ENCODE measurements at regions of chr12 and their contacts with region 1.

Region 1: GRCh38 chr12:55073043-55074022 is 52.9 kb upstream of the OR9K2 start:
- DNase-seq: peak; percentile 90
- H3K4me3 Mint-ChIP-seq: no peak overlapping the region
- H3K27ac Mint-ChIP-seq: no peak overlapping the region
- H3K4me1 Mint-ChIP-seq: peaks cover 3% of the 10 kb centered on the region
- H3K27me3 Mint-ChIP-seq: peaks cover 21% of the 10 kb centered on the region

Region 2: GRCh38 chr12:54701940-54702592 is 371.3 kb before region 1 on chr12:
- CTCF ChIA-PET with region 1: interaction called, 32 read pairs
- intact Hi-C with region 1: loop called (anchors 1 kb)
- DNase-seq: no peak
- H3K4me3 Mint-ChIP-seq: no peak overlapping the region
- H3K27ac Mint-ChIP-seq: no peak overlapping the region
- H3K4me1 Mint-ChIP-seq: no peaks in the 10 kb centered on the region
- H3K27me3 Mint-ChIP-seq: no peaks in the 10 kb centered on the region

Region 3: DNA sequence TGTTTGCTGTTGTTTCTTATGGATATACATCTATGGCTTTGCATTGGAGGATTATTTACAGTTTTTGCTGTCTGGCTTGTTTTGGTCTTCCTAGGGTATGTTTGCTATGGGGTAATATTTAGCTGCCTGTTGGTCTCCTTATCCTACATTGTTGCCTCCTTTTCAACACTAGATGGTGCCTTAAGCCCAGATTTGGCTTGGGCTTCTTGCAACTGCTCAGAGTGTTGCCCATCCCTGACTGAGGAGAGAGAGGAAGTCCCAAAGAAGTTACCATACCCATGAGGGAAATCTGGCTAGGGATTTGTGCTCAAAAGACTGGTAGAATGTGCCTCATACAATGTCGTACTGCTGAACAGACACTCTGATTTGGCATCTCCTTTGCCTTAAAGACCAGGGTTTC is 313.6 kb before region 1 on chr12:
- CTCF ChIA-PET with region 1: interaction called, 52 read pairs
- intact Hi-C with region 1: no loop called
- DNase-seq: peak; percentile 38
- H3K4me3 Mint-ChIP-seq: no peak overlapping the region
- H3K27ac Mint-ChIP-seq: no peak overlapping the region
- H3K4me1 Mint-ChIP-seq: peaks cover 19% of the 10 kb centered on the region
- H3K27me3 Mint-ChIP-seq: no peaks in the 10 kb centered on the region

Region 4: DNA sequence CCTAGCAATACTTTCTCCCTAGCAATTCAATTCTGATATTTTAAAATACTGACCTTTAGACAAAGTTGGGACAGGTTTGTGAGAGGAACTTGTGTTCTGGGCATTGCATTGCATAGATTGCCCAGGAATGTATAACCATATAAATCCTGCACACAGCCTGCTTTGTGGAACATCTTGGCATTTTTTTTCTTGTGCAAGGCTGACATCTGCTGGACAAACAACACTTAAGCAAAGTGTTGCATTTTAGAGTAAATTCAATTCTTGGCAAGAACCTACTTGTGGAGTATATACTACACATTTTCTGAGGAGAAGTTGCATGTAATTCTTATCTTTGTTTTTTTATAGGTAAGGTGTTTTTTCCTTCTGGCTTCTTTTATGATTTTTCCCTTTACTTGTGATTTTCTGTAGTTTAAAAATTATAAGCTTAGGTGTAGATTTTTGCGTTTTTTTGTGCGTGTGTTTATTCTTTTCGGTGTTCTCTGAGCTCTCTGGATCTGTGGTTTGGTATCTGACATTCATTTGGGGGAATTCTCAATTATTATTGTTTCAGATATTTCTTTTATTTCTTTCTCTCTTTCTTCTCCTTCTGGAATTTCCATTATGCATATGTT is 115.2 kb before region 1 on chr12:
- CTCF ChIA-PET with region 1: interaction called, 17 read pairs
- intact Hi-C with region 1: loop called (anchors 1 kb)
- DNase-seq: peak; percentile 75
- H3K4me3 Mint-ChIP-seq: no peak overlapping the region
- H3K27ac Mint-ChIP-seq: peak overlapping the region; percentile 76
- H3K4me1 Mint-ChIP-seq: peaks cover 88% of the 10 kb centered on the region
- H3K27me3 Mint-ChIP-seq: no peaks in the 10 kb centered on the region

Region 5: DNA sequence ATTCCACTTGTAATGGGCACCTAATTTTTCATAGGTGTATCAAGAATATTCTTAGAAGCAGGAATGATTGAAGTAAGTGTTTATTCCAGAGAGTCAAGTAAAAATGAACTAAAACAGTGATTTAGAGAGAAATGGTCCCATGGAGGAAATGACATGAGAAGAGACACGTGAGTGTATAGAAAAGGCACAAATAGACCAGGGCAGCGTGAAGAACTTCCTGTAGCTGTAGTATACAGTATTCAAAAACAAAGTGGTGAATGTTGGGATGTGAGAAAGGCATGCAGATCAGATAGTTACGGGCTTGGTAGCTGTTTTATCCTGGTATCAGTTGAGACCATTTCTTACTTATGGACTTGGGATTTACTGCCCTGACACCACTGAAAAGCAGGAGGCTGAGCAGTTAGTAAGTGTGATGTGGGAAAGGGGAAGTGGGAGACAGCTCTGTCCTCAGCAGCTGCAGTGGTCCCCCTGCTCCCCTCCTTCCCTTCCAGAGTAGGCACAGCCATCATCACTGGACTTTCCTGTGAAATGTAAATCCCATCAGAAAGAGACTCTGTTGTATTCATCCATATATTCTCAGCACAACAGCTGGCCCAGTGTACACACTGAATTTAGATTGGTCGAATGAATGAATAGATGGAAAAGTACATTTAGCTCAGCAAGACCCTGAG is 72.0 kb before region 1 on chr12:
- CTCF ChIA-PET with region 1: interaction called, 552 read pairs
- intact Hi-C with region 1: no loop called
- DNase-seq: no peak
- H3K4me3 Mint-ChIP-seq: no peak overlapping the region
- H3K27ac Mint-ChIP-seq: no peak overlapping the region
- H3K4me1 Mint-ChIP-seq: peaks cover 18% of the 10 kb centered on the region
- H3K27me3 Mint-ChIP-seq: no peaks in the 10 kb centered on the region

Region 6: DNA sequence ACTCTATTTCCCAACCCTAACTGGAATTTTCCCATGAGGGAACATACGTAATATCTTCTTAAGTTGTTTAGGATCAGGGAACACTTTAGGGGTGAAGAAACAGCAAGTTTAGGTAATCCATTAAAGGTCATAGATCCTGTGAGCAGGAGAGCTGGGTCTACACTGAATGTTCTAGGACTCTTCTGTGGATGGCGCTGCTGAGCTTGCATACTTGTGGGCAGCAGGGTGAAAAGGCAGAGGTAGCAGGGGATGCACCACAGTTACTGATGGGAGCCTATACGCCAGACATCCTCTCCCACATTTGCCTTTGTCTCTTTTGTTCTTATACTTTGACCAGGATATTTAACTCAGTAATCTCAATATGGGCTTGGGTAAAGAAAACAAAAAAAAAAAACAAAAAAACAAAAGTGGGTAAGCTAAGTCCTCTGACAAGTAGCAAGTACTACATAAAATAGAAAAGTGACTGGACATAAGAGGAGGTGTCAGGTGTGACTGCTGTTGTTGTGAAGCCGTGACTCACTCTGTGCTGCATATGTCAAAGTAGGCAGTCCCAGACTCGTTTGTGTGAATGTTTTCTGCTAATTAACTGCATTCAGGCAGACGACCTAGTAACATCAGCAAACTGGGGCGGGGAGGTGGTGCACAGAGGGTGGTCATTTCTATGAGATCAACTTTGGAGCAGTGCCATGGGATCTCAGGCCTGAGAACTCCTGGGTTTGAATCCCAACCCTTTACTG is 22.0 kb before region 1 on chr12:
- CTCF ChIA-PET with region 1: interaction called, 14 read pairs
- intact Hi-C with region 1: no loop called
- DNase-seq: no peak
- H3K4me3 Mint-ChIP-seq: no peak overlapping the region
- H3K27ac Mint-ChIP-seq: no peak overlapping the region
- H3K4me1 Mint-ChIP-seq: no peaks in the 10 kb centered on the region
- H3K27me3 Mint-ChIP-seq: no peaks in the 10 kb centered on the region

Region 7: DNA sequence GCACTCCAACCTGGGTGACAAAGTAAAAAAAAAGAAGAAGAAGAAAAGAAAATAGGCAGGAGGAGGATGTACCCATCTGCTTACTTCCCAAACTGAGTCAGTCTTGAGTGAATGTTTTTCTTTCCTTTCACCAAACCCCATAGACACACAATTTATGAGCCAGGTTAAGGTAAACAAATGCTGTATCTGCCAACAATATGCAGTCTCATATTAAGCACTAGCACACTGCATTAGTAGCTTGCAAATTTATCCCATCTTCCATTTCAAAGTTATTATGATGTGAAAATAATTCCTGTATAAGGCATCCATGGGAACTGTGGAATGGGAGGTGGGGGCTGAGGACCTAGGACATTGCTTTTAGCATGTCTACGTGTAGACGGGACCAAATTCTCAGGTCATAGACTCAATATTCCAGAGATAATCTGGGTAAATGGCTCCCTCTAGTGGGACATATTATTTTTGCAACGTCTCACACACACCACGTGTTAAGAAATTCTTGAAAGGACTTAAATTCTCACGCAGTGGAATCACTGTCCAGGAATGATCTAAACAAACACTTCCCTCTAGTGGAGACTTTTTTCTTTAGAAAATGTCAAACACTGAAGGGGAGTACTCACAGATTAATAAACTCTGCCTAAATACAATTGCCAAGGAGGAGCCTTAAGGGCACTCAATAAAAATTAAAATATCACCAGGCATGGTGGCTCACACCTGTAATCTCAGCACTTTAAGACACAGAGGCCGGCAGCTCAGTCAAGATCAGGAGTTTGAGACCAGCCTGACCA is 546.2 kb after region 1 on chr12:
- CTCF ChIA-PET with region 1: no interaction called
- intact Hi-C with region 1: loop called (anchors 5 kb)
- DNase-seq: peak; percentile 62
- H3K4me3 Mint-ChIP-seq: no peak overlapping the region
- H3K27ac Mint-ChIP-seq: no peak overlapping the region
- H3K4me1 Mint-ChIP-seq: peaks cover 10% of the 10 kb centered on the region
- H3K27me3 Mint-ChIP-seq: peaks cover 44% of the 10 kb centered on the region

Measured in activated naive CD4-positive, alpha-beta T cell treated with anti-CD3 and anti-CD28 coated beads for 36 hours (primary cell).